ENCODE measurements at regions of chr10 and their contacts with region 1.

Region 1: GRCh38 chr10:86399879-86400704 is 33.5 kb upstream of the GRID1 start:
- DNase-seq: peak; percentile 97
- H3K4me3 Mint-ChIP-seq: peak overlapping the region; percentile 85
- H3K27ac Mint-ChIP-seq: peak overlapping the region; percentile 91
- H3K4me1 Mint-ChIP-seq: peaks cover 18% of the 10 kb centered on the region
- H3K27me3 Mint-ChIP-seq: peaks cover 40% of the 10 kb centered on the region

Region 2: DNA sequence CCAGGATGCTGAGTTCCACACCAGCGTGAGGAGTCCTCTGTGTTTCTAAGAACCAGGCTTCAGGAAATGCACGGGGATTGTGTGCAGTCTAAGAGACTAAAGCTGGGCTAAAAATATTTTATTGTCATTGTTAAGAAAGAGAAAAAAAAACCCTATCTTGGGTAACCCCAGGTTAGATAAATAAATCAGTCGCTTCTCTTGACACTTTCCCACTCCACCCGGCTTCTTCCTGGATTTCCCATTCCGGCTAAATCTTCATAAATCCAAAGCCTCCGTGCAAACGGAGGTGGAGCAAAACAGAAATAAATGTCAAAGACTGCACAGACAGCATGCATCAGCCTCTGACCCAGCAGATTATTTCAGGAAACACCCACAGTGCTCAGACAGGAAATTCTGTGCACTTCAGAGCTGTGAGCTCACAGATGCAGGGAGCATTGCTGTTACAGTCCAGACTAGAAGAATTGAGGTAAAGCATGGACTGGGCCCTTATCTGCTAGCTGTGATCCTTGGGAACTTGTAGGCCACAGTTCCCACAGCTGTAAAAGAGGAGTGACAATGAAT is 11.3 kb after region 1 on chr10:
- CTCF ChIA-PET with region 1: interaction called, 32 read pairs
- DNase-seq: peak; percentile 56
- H3K4me3 Mint-ChIP-seq: peak overlapping the region; percentile 57
- H3K27ac Mint-ChIP-seq: peak overlapping the region; percentile 88
- H3K4me1 Mint-ChIP-seq: peaks cover 59% of the 10 kb centered on the region
- H3K27me3 Mint-ChIP-seq: no peaks in the 10 kb centered on the region

Region 3: DNA sequence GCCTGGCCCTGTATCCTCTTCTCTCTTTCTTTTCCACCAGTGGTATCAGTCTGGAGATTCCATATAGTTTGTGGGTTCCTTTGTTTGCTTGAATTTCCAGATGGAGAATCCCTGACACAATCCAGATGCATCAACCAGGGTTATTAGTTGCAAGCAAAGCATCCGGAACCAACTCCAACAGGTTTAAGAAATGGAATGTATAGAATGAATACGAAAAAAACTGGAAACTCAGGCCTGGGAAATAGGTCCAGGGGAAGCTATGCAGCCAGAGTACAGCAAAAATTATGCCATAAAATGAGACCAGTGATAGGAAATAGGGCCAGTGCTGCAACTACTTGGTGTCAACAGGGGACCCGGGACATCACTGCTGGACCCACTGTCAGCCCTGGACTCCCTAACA is 173.8 kb after region 1 on chr10:
- CTCF ChIA-PET with region 1: no interaction called
- DNase-seq: no peak
- H3K4me3 Mint-ChIP-seq: no peak overlapping the region
- H3K27ac Mint-ChIP-seq: no peak overlapping the region
- H3K4me1 Mint-ChIP-seq: no peaks in the 10 kb centered on the region
- H3K27me3 Mint-ChIP-seq: peaks cover 13% of the 10 kb centered on the region

Region 4: GRCh38 chr10:86585037-86585725 is 185.1 kb after region 1 on chr10:
- CTCF ChIA-PET with region 1: interaction called, 60 read pairs
- DNase-seq: peak; percentile 79
- H3K4me3 Mint-ChIP-seq: no peak overlapping the region
- H3K27ac Mint-ChIP-seq: no peak overlapping the region
- H3K4me1 Mint-ChIP-seq: peaks cover 3% of the 10 kb centered on the region
- H3K27me3 Mint-ChIP-seq: peaks cover 18% of the 10 kb centered on the region